SK-N-SH (cell line): ENCODE measurements at regions of chr16 and their contacts with region 1.

Region 1: GRCh38 chr16:47037746-47038458 is 64.4 kb upstream of the DNAJA2 start:
- DNase-seq: peak; percentile 98
- H3K4me3 ChIP-seq: peak overlapping the region; percentile 63 to 73
- H3K27ac ChIP-seq: no peak overlapping the region
- H3K4me1 ChIP-seq: no peaks in the 10 kb centered on the region
- H3K27me3 ChIP-seq: no peaks in the 10 kb centered on the region
- CTCF ChIP-seq: peak; percentile 83
- EP300 ChIP-seq: no peak
- RAD21 ChIP-seq: peak; percentile 72

Region 2: GRCh38 chr16:46836534-46837530 is 201.1 kb before region 1 on chr16:
- CTCF ChIA-PET with region 1: no interaction called
- POLR2A ChIA-PET with region 1: no interaction called
- DNase-seq: no peak
- H3K4me3 ChIP-seq: no peak overlapping the region
- H3K27ac ChIP-seq: no peak overlapping the region
- H3K4me1 ChIP-seq: 0 out of 4 replicates have a peak, but pooled peaks cover 0 to 2% of the 10 kb centered on the region in 2 experiments
- H3K27me3 ChIP-seq: no peaks in the 10 kb centered on the region
- CTCF ChIP-seq: no peak
- EP300 ChIP-seq: no peak
- RAD21 ChIP-seq: no peak

Region 3: GRCh38 chr16:46947900-46948547 is 89.9 kb before region 1 on chr16:
- CTCF ChIA-PET with region 1: interaction called, 10 read pairs
- POLR2A ChIA-PET with region 1: no interaction called
- DNase-seq: peak; percentile 65
- H3K4me3 ChIP-seq: no peak overlapping the region
- H3K27ac ChIP-seq: no peak overlapping the region
- H3K4me1 ChIP-seq: no peaks in the 10 kb centered on the region
- H3K27me3 ChIP-seq: no peaks in the 10 kb centered on the region
- CTCF ChIP-seq: peak; percentile 72
- EP300 ChIP-seq: no peak
- RAD21 ChIP-seq: peak; percentile 87

Region 4: GRCh38 chr16:47018223-47018891 is 19.5 kb before region 1 on chr16:
- CTCF ChIA-PET with region 1: interaction called, 18 read pairs
- POLR2A ChIA-PET with region 1: no interaction called
- DNase-seq: peak; percentile 76
- H3K4me3 ChIP-seq: no peak overlapping the region
- H3K27ac ChIP-seq: no peak overlapping the region
- H3K4me1 ChIP-seq: no peaks in the 10 kb centered on the region
- H3K27me3 ChIP-seq: no peaks in the 10 kb centered on the region
- CTCF ChIP-seq: peak; percentile 43
- EP300 ChIP-seq: no peak
- RAD21 ChIP-seq: peak; percentile 73

Region 5: GRCh38 chr16:47052666-47053640 is 15.1 kb after region 1 on chr16:
- CTCF ChIA-PET with region 1: interaction called, 36 read pairs
- POLR2A ChIA-PET with region 1: no interaction called
- DNase-seq: no peak
- H3K4me3 ChIP-seq: no peak overlapping the region
- H3K27ac ChIP-seq: no peak overlapping the region
- H3K4me1 ChIP-seq: no peaks in the 10 kb centered on the region
- H3K27me3 ChIP-seq: no peaks in the 10 kb centered on the region
- CTCF ChIP-seq: no peak
- EP300 ChIP-seq: no peak
- RAD21 ChIP-seq: no peak

Region 6: DNA sequence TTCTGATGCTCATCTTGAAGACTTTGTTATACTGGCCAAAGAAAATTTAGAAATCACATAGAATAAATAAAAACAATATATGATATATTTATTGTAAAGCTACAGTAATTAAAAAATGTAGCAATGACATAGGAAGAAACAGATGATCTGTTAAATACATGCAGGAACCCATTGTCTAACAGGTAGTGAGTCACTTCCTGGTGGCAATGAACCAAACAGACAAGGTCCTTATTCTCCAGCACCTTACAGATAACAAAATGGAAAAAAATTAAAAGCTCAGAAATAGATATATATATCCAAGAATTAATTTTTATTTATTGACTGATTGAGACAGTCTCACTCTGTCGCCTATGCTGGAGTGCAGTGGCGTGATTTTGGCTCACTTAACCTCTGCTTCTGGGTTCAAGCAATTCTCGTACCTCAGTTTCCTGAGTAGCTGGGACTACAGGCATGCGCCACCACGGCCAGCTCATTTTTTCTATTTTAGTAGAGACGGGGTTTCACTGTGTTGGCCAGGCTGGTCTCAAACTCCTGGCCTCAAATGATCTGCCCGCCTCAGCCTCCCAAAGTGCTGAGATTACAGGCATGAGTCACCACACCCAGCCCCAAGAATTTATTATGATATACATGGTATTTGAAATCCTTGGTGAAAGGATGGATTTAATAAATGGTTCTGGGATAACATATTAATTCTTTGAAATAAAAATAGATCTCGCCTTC is 98.4 kb after region 1 on chr16:
- CTCF ChIA-PET with region 1: interaction called, 53 read pairs
- POLR2A ChIA-PET with region 1: no interaction called
- DNase-seq: no peak
- H3K4me3 ChIP-seq: no peak overlapping the region
- H3K27ac ChIP-seq: no peak overlapping the region
- H3K4me1 ChIP-seq: peaks cover 8 to 10% of the 10 kb centered on the region in 2 experiments
- H3K27me3 ChIP-seq: no peaks in the 10 kb centered on the region
- CTCF ChIP-seq: no peak
- EP300 ChIP-seq: no peak
- RAD21 ChIP-seq: no peak

Region 7: GRCh38 chr16:48156790-48157209 is 1118.9 kb after region 1 on chr16:
- CTCF ChIA-PET with region 1: interaction called, 46 read pairs
- POLR2A ChIA-PET with region 1: no interaction called
- DNase-seq: peak; percentile 81
- H3K4me3 ChIP-seq: no peak overlapping the region; a peak in 1 of 4 replicates
- H3K27ac ChIP-seq: no peak overlapping the region
- H3K4me1 ChIP-seq: peaks cover 0 to 14% of the 10 kb centered on the region in 2 experiments; a peak in 1 of 4 replicates
- H3K27me3 ChIP-seq: no peaks in the 10 kb centered on the region
- CTCF ChIP-seq: peak; percentile 95
- EP300 ChIP-seq: no peak
- RAD21 ChIP-seq: peak; percentile 89

Region 8: GRCh38 chr16:48164907-48165726 is 1127.2 kb after region 1 on chr16:
- CTCF ChIA-PET with region 1: interaction called, 46 read pairs
- POLR2A ChIA-PET with region 1: no interaction called
- DNase-seq: peak; percentile 88
- H3K4me3 ChIP-seq: peak overlapping the region in 1 of 2 experiments; percentile 12; a peak in 1 of 4 replicates
- H3K27ac ChIP-seq: no peak overlapping the region
- H3K4me1 ChIP-seq: peaks cover 0 to 4% of the 10 kb centered on the region in 2 experiments; a peak in 1 of 4 replicates
- H3K27me3 ChIP-seq: no peaks in the 10 kb centered on the region
- CTCF ChIP-seq: peak; percentile 88
- EP300 ChIP-seq: no peak
- RAD21 ChIP-seq: peak; percentile 93